ENCODE measurements at regions of chr5 and their contacts with region 1.

Region 1: GRCh38 chr5:140157032-140157803 is 17.8 kb upstream of the CYSTM1 start:
- DNase-seq: peak; percentile 83 to 95 (median 91)
- ATAC-seq: peak; percentile 95 to 99 (median 98)
- H3K4me3 ChIP-seq: peak overlapping the region in 2 of 4 donors; percentile 1 to 29
- H3K27ac ChIP-seq: peak overlapping the region in 2 of 4 donors; percentile 19 to 41
- H3K4me1 ChIP-seq: peaks cover 0 to 6% (median 0%) of the 10 kb centered on the region in 3 donors
- H3K27me3 ChIP-seq: no peaks in the 10 kb centered on the region
- CTCF ChIP-seq: peak; percentile 81 to 90 (median 84)

Region 2: DNA sequence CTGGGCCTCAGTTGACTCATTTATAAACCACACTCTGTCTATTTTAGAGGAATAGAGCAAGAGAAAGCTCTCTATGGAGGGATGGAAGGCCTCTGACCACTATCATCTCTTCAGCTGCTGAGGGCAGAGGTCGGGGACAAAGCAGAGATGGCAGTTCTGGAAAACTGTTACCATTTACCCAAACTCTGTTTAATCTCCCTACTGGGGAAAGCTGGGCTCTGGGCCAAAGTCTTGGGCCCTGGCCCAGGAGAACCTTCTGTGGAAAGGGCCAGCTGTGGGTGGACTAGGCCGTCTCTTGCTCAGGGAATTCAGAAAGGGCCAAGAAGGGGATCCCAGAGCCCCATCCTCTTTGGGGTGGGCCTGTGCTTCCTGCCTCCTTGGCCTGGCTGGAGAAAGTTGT is 261.6 kb before region 1 on chr5:
- intact Hi-C with region 1: no loop called
- DNase-seq: peak in 5 of 6 donors; percentile 28 to 57 (median 38)
- ATAC-seq: peak; percentile 50 to 76 (median 62)
- H3K4me3 ChIP-seq: no peak overlapping the region
- H3K27ac ChIP-seq: no peak overlapping the region
- H3K4me1 ChIP-seq: no peaks in the 10 kb centered on the region
- H3K27me3 ChIP-seq: no peaks in the 10 kb centered on the region
- CTCF ChIP-seq: no peak

Region 3: GRCh38 chr5:139968547-139969261 is 188.5 kb before region 1 on chr5:
- intact Hi-C with region 1: loop called in 1 of 3 experiments (anchors 10 kb)
- DNase-seq: peak; percentile 81 to 98 (median 94)
- ATAC-seq: peak; percentile 97 to 100 (median 100)
- H3K4me3 ChIP-seq: no peak overlapping the region
- H3K27ac ChIP-seq: no peak overlapping the region
- H3K4me1 ChIP-seq: peaks cover 0 to 8% (median 3%) of the 10 kb centered on the region in 3 donors
- H3K27me3 ChIP-seq: no peaks in the 10 kb centered on the region
- CTCF ChIP-seq: peak; percentile 98 to 100 (median 98)

Region 4: GRCh38 chr5:140075371-140075770 is 81.8 kb before region 1 on chr5:
- intact Hi-C with region 1: loop called in 2 of 3 experiments (anchors 5 kb)
- DNase-seq: no peak
- ATAC-seq: peak in 2 of 4 donors; percentile 20 to 46
- H3K4me3 ChIP-seq: no peak overlapping the region
- H3K27ac ChIP-seq: no peak overlapping the region
- H3K4me1 ChIP-seq: no peaks in the 10 kb centered on the region
- H3K27me3 ChIP-seq: no peaks in the 10 kb centered on the region
- CTCF ChIP-seq: no peak

Region 5: GRCh38 chr5:140609126-140609525 is 451.9 kb after region 1 on chr5:
- intact Hi-C with region 1: no loop called
- DNase-seq: no peak
- ATAC-seq: peak in 3 of 4 donors; percentile 40 to 66 (median 49)
- H3K4me3 ChIP-seq: no peak overlapping the region
- H3K27ac ChIP-seq: no peak overlapping the region
- H3K4me1 ChIP-seq: no peaks in the 10 kb centered on the region
- H3K27me3 ChIP-seq: no peaks in the 10 kb centered on the region
- CTCF ChIP-seq: no peak

Measured in pancreas (tissue), 10 donors.